ENCODE measurements at regions of chr14 and their contacts with region 1.

Region 1: DNA sequence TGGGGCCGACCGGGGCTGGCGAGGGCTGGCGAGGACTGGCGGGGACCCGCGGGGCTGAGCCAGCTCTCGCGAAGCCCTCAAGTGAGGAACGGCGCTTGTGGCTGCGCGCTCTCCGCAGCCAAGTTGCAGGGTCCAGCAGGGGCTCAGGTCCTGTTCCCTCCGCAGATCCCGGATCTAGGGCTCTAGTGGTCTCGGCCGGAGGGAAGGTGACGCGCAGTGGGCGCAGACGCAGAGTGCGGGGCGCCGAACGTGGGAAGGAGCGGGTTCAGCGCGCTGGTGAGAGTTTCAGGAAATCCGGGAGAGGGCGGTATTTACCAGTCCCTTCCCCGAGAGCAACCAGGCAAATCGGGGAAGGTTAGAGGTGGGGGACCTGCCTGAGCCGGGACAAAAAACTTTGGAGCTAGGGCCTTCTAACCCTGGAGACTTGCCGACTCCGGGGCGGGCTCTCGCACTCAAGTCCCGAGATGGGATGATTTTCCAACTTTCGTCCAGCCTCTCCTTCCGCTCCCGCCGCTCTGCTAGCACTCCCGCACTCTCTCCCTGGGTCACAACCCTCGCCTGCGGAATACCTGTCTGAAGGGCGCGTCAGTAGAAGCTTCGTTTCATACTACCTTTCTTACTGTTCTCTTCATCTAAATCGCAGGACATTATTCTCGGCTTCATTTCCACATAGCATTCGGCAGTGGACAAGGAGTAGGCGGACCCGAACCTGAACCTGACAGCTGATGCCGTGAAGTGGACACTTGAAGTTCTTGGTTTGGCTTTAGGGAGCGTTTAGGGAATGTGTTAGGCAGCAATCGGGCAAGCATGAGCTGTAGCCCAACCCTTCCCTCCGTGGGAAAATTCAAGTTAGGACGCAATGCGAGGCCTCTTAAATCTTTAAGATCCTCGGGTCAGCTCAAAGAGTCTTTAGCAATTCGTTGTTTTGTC is 13.6 kb upstream of the PAX9 start:
- DNase-seq: peak; percentile 45
- H3K27ac ChIP-seq: no peak overlapping the region
- CTCF ChIP-seq: peak; percentile 26

Region 2: GRCh38 chr14:36634248-36634647 is 13.8 kb before region 1 on chr14:
- CTCF ChIA-PET with region 1: interaction called, 10 read pairs
- POLR2A ChIA-PET with region 1: no interaction called
- DNase-seq: no peak
- H3K27ac ChIP-seq: no peak overlapping the region
- CTCF ChIP-seq: no peak

Region 3: DNA sequence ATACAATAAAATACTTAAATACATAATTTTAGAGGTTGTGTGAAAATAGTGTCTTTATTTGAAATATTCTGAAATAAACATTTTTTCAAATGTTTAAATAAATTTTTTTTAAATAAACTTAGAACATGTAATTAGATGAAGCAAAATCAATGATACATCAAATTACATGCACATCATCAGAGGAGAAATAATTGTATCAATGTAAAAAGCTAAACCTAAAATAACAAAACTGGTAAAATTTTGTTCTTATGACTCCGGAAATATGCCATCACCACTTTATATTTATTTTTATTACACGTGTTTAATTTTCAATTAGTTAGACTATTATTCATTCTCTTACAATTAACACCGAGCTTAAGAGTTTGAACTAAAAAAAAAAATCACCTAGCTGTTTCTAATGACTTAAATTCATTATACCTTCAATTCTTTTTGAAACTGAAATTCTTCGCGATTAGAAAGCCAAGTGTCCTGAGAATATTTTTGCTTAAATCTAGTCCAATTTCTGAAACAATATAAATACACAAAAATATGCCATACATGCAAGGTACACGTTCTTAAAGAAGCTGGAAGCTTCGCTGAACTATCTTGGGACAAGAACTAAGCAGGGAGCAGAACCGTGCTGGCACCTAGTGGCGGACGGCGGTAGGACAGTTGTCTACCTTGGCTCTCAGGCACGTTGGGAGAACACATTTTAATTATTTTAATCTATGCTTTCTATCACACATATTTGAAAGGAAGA is 293.9 kb after region 1 on chr14:
- CTCF ChIA-PET with region 1: interaction called, 19 read pairs
- POLR2A ChIA-PET with region 1: interaction called, 3 read pairs
- DNase-seq: peak; percentile 46
- H3K27ac ChIP-seq: no peak overlapping the region
- CTCF ChIP-seq: peak; percentile 97